A549 (cell line): ENCODE measurements at regions of chr2 and their contacts with region 1.

Region 1: GRCh38 chr2:159712143-159712928 is at the start of gene MARCHF7:
- DNase-seq: peak; percentile 89 to 97
- ATAC-seq: peak; percentile 97 to 98
- H3K4me3 ChIP-seq: peak within 1 kb of the TSS; percentile 91
- H3K27ac ChIP-seq: peak within 1 kb of the TSS; percentile 97 to 99
- H3K4me1 ChIP-seq: peaks cover 34% of the 10 kb centered on the region
- CTCF ChIP-seq: peak; percentile 76
- EP300 ChIP-seq: no peak
- POLR2A ChIP-seq: peak; percentile 89
- RAD21 ChIP-seq: peak; percentile 68 to 95
- polyA plus RNA-seq, gene MARCHF7: 66.4 and 68.6 TPM in 2 replicates

Region 2: GRCh38 chr2:159286709-159287441 is 425.5 kb before region 1 on chr2:
- CTCF ChIA-PET with region 1: interaction called, 5 read pairs
- POLR2A ChIA-PET with region 1: interaction called, 13 read pairs
- DNase-seq: peak; percentile 81 to 95
- ATAC-seq: peak; percentile 87 to 94
- H3K4me3 ChIP-seq: peak overlapping the region; percentile 74
- H3K27ac ChIP-seq: peak overlapping the region; percentile 88 to 96
- H3K4me1 ChIP-seq: peaks cover 27% of the 10 kb centered on the region
- CTCF ChIP-seq: no peak
- EP300 ChIP-seq: no peak
- POLR2A ChIP-seq: peak; percentile 84
- RAD21 ChIP-seq: 0 out of 5 replicates have a peak, but pooled peaks of 1 of the 2 experiments have one; percentile 6

Region 3: DNA sequence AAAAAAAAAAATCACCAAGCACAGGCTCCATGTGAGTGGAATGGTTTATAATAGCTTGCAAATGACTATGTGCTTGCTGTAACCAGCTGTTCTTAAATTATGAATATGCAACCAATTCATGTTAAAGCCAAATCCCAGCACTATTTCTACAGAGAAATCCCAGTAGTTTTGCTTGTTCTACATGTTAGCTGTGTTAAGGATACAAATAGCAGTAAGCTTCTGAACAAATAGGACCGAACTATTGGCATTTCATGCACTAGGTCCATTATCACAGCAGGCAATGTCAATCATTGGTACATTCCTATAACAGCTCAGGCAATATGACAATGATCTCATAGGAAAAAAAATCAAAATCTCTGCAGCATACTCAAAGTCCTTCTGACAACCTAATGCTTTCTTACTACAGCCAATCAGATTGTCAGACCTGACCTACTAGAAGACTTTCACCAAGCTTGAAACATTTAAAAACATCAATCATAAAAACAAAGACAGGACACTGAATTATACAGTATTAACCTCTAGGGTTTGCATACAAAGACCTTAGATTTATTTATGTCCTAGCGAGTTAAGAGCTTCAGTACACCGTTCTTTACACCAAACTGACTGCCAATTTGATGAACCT is 102.4 kb before region 1 on chr2:
- CTCF ChIA-PET with region 1: interaction called, 7 read pairs
- POLR2A ChIA-PET with region 1: interaction called, 84 read pairs
- DNase-seq: no peak
- ATAC-seq: no peak
- H3K4me3 ChIP-seq: no peak overlapping the region; the same call in 2 of the 3 replicates
- H3K27ac ChIP-seq: no peak overlapping the region
- H3K4me1 ChIP-seq: peaks cover 70% of the 10 kb centered on the region
- CTCF ChIP-seq: no peak
- EP300 ChIP-seq: no peak
- POLR2A ChIP-seq: no peak
- RAD21 ChIP-seq: no peak

Region 4: DNA sequence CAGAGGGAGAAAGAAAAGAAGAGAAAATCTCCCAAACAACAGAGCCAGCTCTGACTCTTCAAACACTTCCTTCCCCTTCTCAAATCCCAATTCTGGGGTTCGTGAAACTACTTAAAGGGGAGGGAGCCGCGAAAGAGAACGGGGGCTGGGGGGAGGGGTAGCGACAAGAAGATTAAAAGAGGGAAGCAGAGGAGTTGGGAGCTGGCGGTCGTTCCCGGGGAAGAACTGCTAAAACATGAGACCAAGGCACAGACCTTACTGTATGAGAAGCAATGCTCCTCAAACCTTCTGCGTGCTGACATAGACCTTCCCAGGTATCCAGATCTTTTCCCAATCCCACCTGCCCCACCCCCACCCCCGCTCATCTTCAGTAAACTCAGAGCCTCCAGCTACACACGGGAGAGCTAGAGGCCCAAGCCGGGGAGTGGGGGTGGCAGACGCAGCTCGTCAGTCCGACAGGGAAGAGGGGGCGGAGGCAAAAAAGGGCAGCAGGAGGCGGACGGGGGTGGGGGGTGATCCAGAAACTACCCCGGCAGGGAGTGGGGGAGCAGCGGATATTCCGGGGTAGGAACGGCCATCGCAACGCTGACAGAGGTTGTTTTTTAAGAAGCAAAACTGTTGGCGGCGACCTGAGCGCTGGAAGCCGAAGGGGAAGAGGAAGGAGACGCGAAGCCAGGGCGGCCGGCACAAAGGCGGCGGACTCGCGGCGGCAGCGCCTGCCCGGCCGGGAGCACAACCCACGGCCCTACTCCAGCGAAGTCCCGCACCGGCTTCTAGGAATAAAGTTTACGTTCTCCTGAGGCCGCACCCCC is 97.0 kb before region 1 on chr2:
- CTCF ChIA-PET with region 1: interaction called, 7 read pairs
- POLR2A ChIA-PET with region 1: interaction called, 84 read pairs
- DNase-seq: peak; percentile 70 to 96
- ATAC-seq: peak; percentile 96 to 97
- H3K4me3 ChIP-seq: peak overlapping the region; percentile 67
- H3K27ac ChIP-seq: peak overlapping the region; percentile 96 to 98
- H3K4me1 ChIP-seq: peaks cover 57% of the 10 kb centered on the region
- CTCF ChIP-seq: no peak
- EP300 ChIP-seq: 0 out of 5 replicates have a peak, but pooled peaks of 1 of the 2 experiments have one; percentile 13
- POLR2A ChIP-seq: peak; percentile 59
- RAD21 ChIP-seq: peak; percentile 2 to 25; a peak in 1 of 5 replicates

Region 5: GRCh38 chr2:159695795-159696448 is 16.4 kb before region 1 on chr2:
- CTCF ChIA-PET with region 1: interaction called, 14 read pairs
- POLR2A ChIA-PET with region 1: interaction called, 4 read pairs
- DNase-seq: no peak
- ATAC-seq: no peak
- H3K4me3 ChIP-seq: no peak overlapping the region
- H3K27ac ChIP-seq: no peak overlapping the region
- H3K4me1 ChIP-seq: no peaks in the 10 kb centered on the region
- CTCF ChIP-seq: no peak
- EP300 ChIP-seq: no peak
- POLR2A ChIP-seq: no peak
- RAD21 ChIP-seq: no peak